Prostate gland (tissue), 2 donors: ENCODE measurements at regions of chr2 and their contacts with region 1.

Region 1: GRCh38 chr2:23566236-23567142 is 181.5 kb downstream of the KLHL29 start:
- DNase-seq: no peak
- H3K4me3 ChIP-seq: no peak overlapping the region
- H3K27ac ChIP-seq: peak overlapping the region; percentile 78 to 80
- H3K4me1 ChIP-seq: peaks cover 6% of the 10 kb centered on the region
- H3K27me3 ChIP-seq: no peaks in the 10 kb centered on the region
- CTCF ChIP-seq: peak in 1 of 4 experiments; percentile 34
- POLR2A ChIP-seq: no peak

Region 2: DNA sequence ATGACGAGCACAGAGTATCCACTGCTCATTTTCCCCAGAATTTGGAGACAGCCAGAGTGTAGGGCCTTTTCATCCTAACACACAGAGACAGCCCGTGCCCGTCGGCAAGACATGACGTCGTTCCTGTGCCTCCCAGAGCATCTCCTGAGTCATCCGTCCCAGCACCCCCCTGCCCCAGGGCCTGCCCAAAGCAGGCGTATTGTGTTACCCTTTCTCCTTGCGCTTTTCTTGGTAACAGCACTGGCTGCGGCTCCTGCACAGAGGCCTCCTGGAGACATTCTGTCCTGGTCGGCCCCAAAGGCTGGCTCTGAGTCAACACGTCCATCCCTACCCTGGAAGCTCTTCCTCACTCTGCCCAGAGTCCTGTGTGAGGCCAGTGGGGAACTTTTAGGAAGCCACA is 35.6 kb after region 1 on chr2:
- intact Hi-C with region 1: loop called (anchors 5 kb)
- DNase-seq: no peak
- H3K4me3 ChIP-seq: no peak overlapping the region
- H3K27ac ChIP-seq: peak overlapping the region; percentile 75 to 77
- H3K4me1 ChIP-seq: no peaks in the 10 kb centered on the region
- H3K27me3 ChIP-seq: no peaks in the 10 kb centered on the region
- CTCF ChIP-seq: no peak
- POLR2A ChIP-seq: no peak

Region 3: GRCh38 chr2:23617167-23617810 is 50.8 kb after region 1 on chr2:
- intact Hi-C with region 1: loop called (anchors 5 kb)
- DNase-seq: peak; percentile 74
- H3K4me3 ChIP-seq: peak overlapping the region in 1 of 2 donors; percentile 3
- H3K27ac ChIP-seq: peak overlapping the region; percentile 66 to 83
- H3K4me1 ChIP-seq: peaks cover 4% of the 10 kb centered on the region
- H3K27me3 ChIP-seq: no peaks in the 10 kb centered on the region
- CTCF ChIP-seq: peak in 3 of 4 experiments; percentile 29 to 63 (median 59)
- POLR2A ChIP-seq: no peak